ENCODE measurements at regions of chr22 and their contacts with region 1.

Region 1: GRCh38 chr22:24423519-24424000 is 3.8 kb upstream of the ADORA2A start:
- DNase-seq: no peak
- ATAC-seq: peak; percentile 60 to 68
- H3K4me3 ChIP-seq: peak overlapping the region; percentile 52 to 71 (median 59)
- H3K27ac ChIP-seq: peak overlapping the region in 3 of 4 donors; percentile 40 to 50 (median 41)
- H3K4me1 ChIP-seq: peaks cover 11 to 13% of the 10 kb centered on the region in 2 donors
- H3K27me3 ChIP-seq: peaks cover 4 to 10% (median 6%) of the 10 kb centered on the region in 3 donors
- CTCF ChIP-seq: peak; percentile 69 to 98 (median 92)
- POLR2A ChIP-seq: no peak

Region 2: DNA sequence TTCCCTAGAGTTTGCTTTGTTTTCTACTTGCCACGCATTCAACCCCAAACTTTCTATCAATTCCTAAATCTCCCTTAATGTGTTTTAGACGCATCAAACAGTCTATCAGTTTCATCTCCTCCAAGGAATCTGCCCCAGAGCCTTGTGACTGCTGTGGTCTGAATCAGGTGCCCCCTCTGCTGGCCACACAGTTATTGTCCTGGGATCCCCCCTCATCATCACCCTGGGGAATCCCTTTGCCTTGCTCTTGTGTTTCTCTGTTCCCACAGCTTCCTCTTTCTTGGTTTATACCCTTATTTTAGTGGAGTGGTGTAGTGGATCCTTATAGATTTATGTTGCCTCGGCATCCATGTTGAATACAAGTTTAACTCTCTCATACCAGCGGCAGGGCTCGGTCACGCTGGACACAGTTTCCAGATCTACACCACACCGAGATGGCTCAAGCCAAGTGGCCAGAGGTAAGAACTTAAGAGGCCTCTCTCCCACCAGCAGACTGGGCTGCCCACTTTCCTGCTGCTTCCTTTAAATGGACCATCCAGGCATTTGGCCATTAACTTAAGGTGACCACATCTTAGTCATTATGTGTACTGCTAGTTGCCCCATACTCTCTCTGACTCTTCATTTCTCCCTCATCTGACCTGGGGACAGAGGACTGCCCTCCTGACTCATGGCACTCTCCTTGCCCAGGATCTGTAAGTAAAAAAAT is 79.7 kb after region 1 on chr22:
- in situ Hi-C with region 1: loop called in 1 of 4 experiments (anchors 10 kb)
- intact Hi-C with region 1: loop called (anchors 5 kb)
- DNase-seq: no peak
- ATAC-seq: peak in 1 of 2 donors; percentile 55
- H3K4me3 ChIP-seq: no peak overlapping the region
- H3K27ac ChIP-seq: no peak overlapping the region
- H3K4me1 ChIP-seq: peaks cover 0 to 10% of the 10 kb centered on the region in 2 donors
- H3K27me3 ChIP-seq: no peaks in the 10 kb centered on the region
- CTCF ChIP-seq: peak; percentile 21 to 67 (median 57)
- POLR2A ChIP-seq: no peak

Region 3: GRCh38 chr22:24525416-24526037 is 102.0 kb after region 1 on chr22:
- in situ Hi-C with region 1: loop called in 2 of 4 experiments (anchors 5 to 10 kb)
- intact Hi-C with region 1: loop called (anchors 2 kb)
- DNase-seq: peak; percentile 44 to 69
- ATAC-seq: peak; percentile 59 to 87
- H3K4me3 ChIP-seq: no peak overlapping the region
- H3K27ac ChIP-seq: no peak overlapping the region
- H3K4me1 ChIP-seq: peaks cover 4 to 7% of the 10 kb centered on the region in 2 donors
- H3K27me3 ChIP-seq: no peaks in the 10 kb centered on the region
- CTCF ChIP-seq: peak; percentile 68 to 81 (median 75)
- POLR2A ChIP-seq: no peak

Region 4: GRCh38 chr22:24758164-24758799 is 334.7 kb after region 1 on chr22:
- in situ Hi-C with region 1: loop called in 1 of 4 experiments (anchors 25 kb)
- intact Hi-C with region 1: loop called (anchors 5 kb)
- DNase-seq: no peak
- ATAC-seq: no peak
- H3K4me3 ChIP-seq: no peak overlapping the region
- H3K27ac ChIP-seq: no peak overlapping the region
- H3K4me1 ChIP-seq: no peaks in the 10 kb centered on the region
- H3K27me3 ChIP-seq: peaks cover 0 to 4% (median 3%) of the 10 kb centered on the region in 3 donors
- CTCF ChIP-seq: peak; percentile 66 to 86 (median 72)
- POLR2A ChIP-seq: no peak

Measured in gastrocnemius medialis (tissue), 4 donors.